Activated CD4-positive, alpha-beta T cell treated with anti-CD3 and anti-CD28 coated beads, Interleukin-2, amount 10 ng/mL, durations not matched to agents 7 days and 5 days (primary cell): ENCODE measurements at regions of chr11 and their contacts with region 1.

Region 1: DNA sequence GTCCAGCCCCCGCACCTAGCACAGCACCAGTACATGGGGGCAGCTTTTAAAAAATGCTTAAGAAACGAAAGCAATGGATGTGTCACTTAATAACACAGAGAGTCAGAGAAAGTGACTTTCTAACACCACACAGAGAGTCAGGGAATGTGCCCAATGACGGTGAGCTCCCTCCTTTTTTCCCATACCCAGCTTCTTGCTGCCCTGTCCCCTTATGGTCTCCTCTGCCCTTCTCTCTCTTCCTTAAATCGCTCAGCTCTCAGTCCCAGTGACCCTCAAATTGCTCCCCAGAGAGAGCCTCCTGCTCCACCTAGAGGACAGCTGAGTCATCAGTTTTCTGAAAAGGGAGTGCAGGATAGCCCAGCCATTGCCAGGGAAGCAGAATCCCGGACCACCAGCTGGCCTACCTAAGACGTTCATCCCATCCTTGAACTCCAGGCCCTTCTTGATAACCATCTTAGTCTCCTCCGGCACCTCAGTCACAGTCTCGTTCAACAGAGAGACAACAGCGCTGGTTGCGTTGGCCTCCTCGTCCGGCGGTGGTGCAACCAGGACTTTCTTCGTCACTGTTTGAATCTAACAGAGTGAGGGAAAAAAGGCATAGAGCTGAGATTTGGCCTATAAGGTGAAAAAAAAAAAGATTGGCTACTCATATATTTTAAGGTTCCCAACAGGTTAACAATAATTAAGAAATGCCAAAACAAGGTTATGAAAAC is 113.5 kb downstream of the SLC1A2 start:
- DNase-seq: peak; percentile 46
- H3K4me3 Mint-ChIP-seq: no peak overlapping the region
- H3K27ac Mint-ChIP-seq: peak overlapping the region; percentile 47
- H3K4me1 Mint-ChIP-seq: peaks cover 14% of the 10 kb centered on the region
- H3K27me3 Mint-ChIP-seq: peaks cover 3% of the 10 kb centered on the region

Region 2: DNA sequence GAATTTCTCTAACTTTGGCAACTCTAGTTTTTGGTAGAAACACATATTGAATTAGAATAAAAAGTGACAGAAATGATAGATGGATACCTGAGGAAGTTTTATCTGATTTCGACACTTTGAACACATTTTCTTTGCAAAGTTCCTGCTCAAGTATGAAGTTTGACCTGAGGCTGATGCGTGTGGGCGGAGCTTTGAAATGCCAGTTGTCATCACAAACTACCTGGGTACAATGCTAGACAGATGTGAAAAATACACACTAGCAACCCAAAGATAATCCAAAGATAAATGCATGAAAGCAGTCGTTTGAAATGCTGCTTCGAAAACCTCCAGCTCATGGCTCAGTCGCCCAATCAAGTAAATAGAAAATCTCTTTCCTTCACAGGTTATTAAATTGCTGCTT is 112.1 kb before region 1 on chr11:
- CTCF ChIA-PET with region 1: no interaction called
- POLR2A ChIA-PET with region 1: no interaction called
- DNase-seq: no peak
- H3K4me3 Mint-ChIP-seq: no peak overlapping the region
- H3K27ac Mint-ChIP-seq: peak overlapping the region; percentile 28
- H3K4me1 Mint-ChIP-seq: peaks cover 70% of the 10 kb centered on the region
- H3K27me3 Mint-ChIP-seq: no peaks in the 10 kb centered on the region

Region 3: GRCh38 chr11:35292279-35292678 is 13.5 kb before region 1 on chr11:
- CTCF ChIA-PET with region 1: interaction called, 16 read pairs
- POLR2A ChIA-PET with region 1: no interaction called
- DNase-seq: no peak
- H3K4me3 Mint-ChIP-seq: no peak overlapping the region
- H3K27ac Mint-ChIP-seq: no peak overlapping the region
- H3K4me1 Mint-ChIP-seq: peaks cover 17% of the 10 kb centered on the region
- H3K27me3 Mint-ChIP-seq: no peaks in the 10 kb centered on the region

Region 4: DNA sequence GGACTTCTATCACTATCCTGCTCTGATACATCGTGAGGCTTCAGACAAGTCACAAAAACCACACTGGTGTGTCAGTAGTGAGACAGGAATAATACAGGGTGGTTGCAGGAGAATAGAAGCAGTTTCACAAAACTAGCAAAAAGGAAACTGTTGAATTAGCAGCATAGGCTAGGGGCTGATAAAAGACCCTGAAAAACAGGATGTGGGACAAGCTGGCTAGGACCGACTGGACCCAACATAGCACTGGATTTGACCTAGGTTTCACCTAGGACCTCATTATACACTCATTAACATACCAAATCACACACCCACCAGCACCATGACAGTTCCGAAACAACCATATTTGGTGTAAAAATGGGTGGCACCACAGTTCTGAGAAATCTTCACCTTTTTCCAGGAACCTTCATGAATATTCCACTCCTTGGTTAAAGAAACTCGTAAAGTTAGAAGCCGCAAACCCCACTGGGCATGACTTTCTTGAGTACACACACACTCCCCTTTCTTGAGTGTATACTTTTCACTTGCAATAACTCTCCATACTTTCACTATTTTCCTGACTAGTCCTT is 37.3 kb after region 1 on chr11:
- CTCF ChIA-PET with region 1: no interaction called
- POLR2A ChIA-PET with region 1: no interaction called
- DNase-seq: peak; percentile 58
- H3K4me3 Mint-ChIP-seq: no peak overlapping the region
- H3K27ac Mint-ChIP-seq: peak overlapping the region; percentile 78
- H3K4me1 Mint-ChIP-seq: peaks cover 36% of the 10 kb centered on the region
- H3K27me3 Mint-ChIP-seq: no peaks in the 10 kb centered on the region